ENCODE measurements at regions of chr22 and their contacts with region 1.

Region 1: DNA sequence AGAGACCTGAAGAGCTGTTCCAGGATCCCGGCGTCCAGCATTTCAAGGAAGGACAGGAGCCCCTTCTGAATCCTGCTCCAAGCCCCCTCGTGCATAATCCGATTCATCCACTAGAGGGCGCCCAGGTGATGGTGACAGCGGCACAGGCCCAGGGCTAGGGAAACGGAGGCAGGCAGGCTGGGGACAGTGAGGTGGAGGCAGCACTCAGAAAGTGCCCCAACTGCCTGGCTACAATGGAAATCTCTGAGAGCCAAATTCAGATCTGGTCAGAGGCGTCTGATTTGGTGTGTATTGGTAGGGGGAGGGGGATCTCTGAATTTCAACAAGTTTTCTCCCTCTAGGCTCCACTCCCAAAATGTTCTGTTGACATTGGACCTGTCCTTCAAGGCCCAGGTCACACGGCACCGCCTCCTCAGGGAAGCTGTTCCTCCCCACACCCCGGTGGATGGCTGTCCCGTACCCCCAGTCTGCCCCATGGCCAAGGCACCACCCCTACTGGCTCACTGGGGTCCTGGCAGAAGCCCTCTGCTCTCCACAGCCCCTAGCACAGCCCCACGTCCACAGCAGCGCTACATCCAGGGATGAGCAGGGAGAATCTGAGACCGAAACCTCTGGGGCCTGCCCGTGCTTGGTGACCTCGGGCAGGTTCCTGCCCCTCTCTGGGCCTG is 142.9 kb downstream of the CRYBB2 start:
- DNase-seq: peak; percentile 54
- H3K4me3 ChIP-seq: no peak overlapping the region
- H3K27ac ChIP-seq: no peak overlapping the region
- H3K4me1 ChIP-seq: peaks cover 10% of the 10 kb centered on the region
- H3K27me3 ChIP-seq: no peaks in the 10 kb centered on the region
- CTCF ChIP-seq: peak; percentile 87
- POLR2A ChIP-seq: no peak

Region 2: GRCh38 chr22:25404928-25405816 is 42.8 kb after region 1 on chr22:
- CTCF ChIA-PET with region 1: interaction called, 5 read pairs
- POLR2A ChIA-PET with region 1: no interaction called
- dilution Hi-C with region 1: no loop called
- intact Hi-C with region 1: loop called (anchors 2 kb)
- DNase-seq: no peak
- H3K4me3 ChIP-seq: peak overlapping the region; percentile 49 to 54 (median 51)
- H3K27ac ChIP-seq: peak overlapping the region; percentile 40
- H3K4me1 ChIP-seq: peaks cover 32% of the 10 kb centered on the region
- H3K27me3 ChIP-seq: no peaks in the 10 kb centered on the region
- CTCF ChIP-seq: no peak
- POLR2A ChIP-seq: peak; percentile 47

Region 3: DNA sequence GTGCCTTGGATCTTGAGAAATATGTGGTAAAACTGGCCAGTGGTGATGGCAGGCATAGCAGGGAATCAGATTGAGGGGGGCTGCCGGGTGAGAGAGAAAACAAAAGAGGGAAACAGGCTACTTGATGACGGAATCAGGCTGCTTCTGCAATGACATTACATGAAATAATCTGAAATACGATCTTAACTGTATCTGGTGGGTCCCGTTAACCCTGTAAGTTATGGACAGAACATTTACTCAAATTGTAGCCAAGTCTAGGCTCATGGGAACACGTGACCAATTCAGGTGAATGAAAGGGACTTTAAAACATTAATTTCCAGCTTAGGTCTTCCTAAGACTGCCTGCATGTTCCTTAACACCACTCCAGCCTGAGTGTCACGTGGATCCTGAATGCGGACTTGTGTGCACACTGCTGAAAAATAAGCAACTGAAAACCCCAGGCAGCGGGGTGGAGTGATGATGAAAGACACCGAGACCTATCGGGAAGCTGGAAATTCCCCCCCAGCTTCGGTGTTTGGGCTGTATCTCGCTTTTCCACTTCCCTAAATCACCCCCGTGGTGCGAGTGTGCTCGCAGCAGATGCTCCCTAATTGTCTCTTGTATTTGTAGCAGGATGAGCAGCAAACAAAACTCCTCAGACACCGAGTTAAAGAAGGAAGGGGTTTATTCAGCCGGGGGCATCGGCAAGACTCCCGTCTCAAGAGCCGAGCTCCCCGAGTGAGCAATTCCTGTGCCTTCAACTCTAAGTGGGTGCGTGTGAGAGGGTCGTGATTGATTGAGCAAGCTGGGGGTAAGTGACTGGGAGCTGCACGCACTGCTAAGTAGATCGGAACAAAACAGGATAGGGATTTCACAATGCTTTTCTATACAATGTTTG is 57.1 kb after region 1 on chr22:
- CTCF ChIA-PET with region 1: no interaction called
- POLR2A ChIA-PET with region 1: no interaction called
- dilution Hi-C with region 1: no loop called
- intact Hi-C with region 1: loop called (anchors 5 kb)
- DNase-seq: peak; percentile 70
- H3K4me3 ChIP-seq: no peak overlapping the region
- H3K27ac ChIP-seq: no peak overlapping the region
- H3K4me1 ChIP-seq: no peaks in the 10 kb centered on the region
- H3K27me3 ChIP-seq: peaks cover 42 to 54% of the 10 kb centered on the region in 2 experiments
- CTCF ChIP-seq: no peak
- POLR2A ChIP-seq: no peak

Region 4: DNA sequence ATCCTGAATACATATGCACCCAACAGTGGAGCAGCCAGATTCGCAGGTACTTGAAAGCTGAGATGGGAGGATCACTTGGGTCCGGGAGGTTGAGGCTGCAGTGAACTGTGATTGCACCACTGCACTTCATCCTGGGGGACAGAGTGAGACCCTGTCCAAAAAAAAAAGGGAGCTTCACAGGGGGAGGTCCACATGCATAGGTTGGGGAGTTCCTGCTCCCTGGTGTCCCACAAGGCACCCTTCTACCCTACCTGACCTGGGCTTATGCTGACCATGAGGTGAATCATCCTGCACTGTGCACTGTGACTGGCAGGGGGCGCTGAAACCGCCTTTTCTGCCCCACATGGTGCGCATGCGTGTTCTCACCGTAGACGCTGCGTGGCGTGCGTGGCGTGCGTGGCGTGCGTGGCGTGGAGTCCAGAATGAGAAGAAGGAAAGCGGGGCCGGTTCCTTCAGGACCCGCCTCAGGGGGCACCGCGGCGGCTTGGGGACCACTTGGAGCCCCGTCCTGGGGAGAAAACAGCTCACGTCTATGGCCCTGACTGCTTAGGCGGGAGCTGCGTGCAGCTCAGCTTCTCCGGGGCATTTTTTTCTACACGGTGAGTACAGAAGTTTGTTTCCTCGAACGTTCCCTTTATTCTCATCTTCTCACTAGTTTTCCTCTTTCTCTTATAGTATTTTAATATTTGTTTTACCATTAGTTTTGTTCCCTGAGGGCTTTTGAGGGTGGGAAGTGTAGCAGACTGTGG is 85.5 kb after region 1 on chr22:
- CTCF ChIA-PET with region 1: interaction called, 6 read pairs
- POLR2A ChIA-PET with region 1: no interaction called
- dilution Hi-C with region 1: no loop called
- intact Hi-C with region 1: loop called (anchors 2 kb)
- DNase-seq: peak; percentile 92
- H3K4me3 ChIP-seq: peak overlapping the region; percentile 77 to 97 (median 95)
- H3K27ac ChIP-seq: peak overlapping the region; percentile 62
- H3K4me1 ChIP-seq: peaks cover 17% of the 10 kb centered on the region
- H3K27me3 ChIP-seq: no peaks in the 10 kb centered on the region
- CTCF ChIP-seq: peak; percentile 92 to 93
- POLR2A ChIP-seq: peak; percentile 78

Region 5: GRCh38 chr22:25702040-25702439 is 339.7 kb after region 1 on chr22:
- CTCF ChIA-PET with region 1: no interaction called
- POLR2A ChIA-PET with region 1: no interaction called
- dilution Hi-C with region 1: no loop called
- intact Hi-C with region 1: loop called (anchors 5 kb)
- DNase-seq: peak; percentile 29
- H3K4me3 ChIP-seq: no peak overlapping the region
- H3K27ac ChIP-seq: no peak overlapping the region
- H3K4me1 ChIP-seq: no peaks in the 10 kb centered on the region
- H3K27me3 ChIP-seq: no peaks in the 10 kb centered on the region
- CTCF ChIP-seq: no peak
- POLR2A ChIP-seq: no peak

Region 6: DNA sequence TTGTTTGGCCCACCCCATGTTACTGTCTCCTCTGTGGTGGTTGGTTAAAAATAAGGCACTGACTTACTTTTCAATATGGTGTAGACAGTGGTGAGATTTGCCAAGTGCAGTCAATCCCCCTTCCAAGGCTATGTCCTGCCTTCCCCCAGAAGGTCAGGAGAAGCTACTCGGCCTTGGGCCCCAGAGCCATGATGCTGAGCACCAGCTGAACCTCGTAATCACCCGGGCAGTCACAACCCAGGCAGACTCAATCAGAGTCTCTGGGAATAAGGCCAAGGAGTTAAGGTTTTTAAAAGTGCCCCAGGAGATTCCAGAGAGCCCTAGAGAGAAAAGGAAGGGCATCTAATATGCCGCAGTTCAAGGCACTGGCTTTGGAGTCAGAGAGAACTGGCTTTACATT is 403.5 kb after region 1 on chr22:
- CTCF ChIA-PET with region 1: no interaction called
- POLR2A ChIA-PET with region 1: no interaction called
- dilution Hi-C with region 1: no loop called
- intact Hi-C with region 1: loop called (anchors 2 kb)
- DNase-seq: no peak
- H3K4me3 ChIP-seq: no peak overlapping the region
- H3K27ac ChIP-seq: no peak overlapping the region
- H3K4me1 ChIP-seq: peaks cover 15% of the 10 kb centered on the region
- H3K27me3 ChIP-seq: no peaks in the 10 kb centered on the region
- CTCF ChIP-seq: no peak
- POLR2A ChIP-seq: no peak